Activated T-helper 1 cell treated with anti-CD3 and anti-CD28 coated beads, Interleukin-12 subunit alpha, Interleukin-12 subunit beta, Interleukin-2, Interleukin-4 antibody, amounts not matched to agents 30 ng/mL and 10 ng/mL and 1 ng/mL, durations not matched to agents 14 hours and 24 hours and 36 hours (primary cell): ENCODE measurements at regions of chr6 and their contacts with region 1.

Region 1: GRCh38 chr6:82247634-82248232 is at the start of gene IBTK:
- DNase-seq: peak; percentile 88
- H3K4me3 Mint-ChIP-seq: peak within 1 kb of the TSS; percentile 93
- H3K27ac Mint-ChIP-seq: peak within 1 kb of the TSS; percentile 92
- H3K4me1 Mint-ChIP-seq: peaks cover 39% of the 10 kb centered on the region
- H3K27me3 Mint-ChIP-seq: no peaks in the 10 kb centered on the region
- total RNA-seq, gene IBTK: 36.1 and 39.8 TPM in 2 replicates

Region 2: DNA sequence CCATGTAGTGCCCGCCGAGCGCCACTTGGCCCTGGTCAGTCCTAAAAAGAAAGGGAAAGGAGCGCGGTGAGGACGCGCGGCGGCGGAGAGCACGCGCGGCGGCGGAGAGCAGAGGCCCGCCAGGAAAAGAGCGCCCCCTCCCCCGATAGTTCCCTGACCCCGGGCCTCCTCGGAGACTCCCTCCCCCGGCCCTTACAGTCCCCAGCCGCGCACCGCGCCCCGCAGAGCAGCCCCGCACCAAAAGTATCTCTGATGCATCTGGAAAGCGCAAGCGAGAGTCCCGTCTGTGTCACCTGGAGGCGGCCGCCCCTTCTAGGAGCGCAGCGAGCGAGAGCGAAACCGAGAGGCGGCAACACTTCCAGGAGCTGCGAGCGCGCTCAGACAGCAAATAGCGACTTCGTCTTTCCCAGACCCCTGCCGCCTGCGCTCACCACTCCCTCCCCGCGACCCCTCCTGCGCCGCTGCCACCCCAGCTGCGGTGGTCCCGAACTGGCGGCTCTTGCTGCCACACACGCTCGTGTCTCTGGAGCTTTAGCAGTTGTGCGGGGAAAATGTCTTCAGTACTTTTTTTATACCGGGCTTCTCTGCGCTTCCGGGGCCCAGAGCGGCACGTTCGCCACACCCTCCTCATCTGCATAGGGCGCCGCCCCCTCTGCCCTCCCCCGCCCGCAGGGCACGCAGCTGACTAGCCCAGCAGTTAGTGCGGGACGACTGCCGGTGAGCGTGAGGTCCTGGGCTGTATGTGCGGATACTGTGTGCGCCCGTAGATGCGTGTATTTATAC is 495.4 kb before region 1 on chr6 and contains the start of gene TENT5A:
- intact Hi-C with region 1: loop called (anchors 5 kb)
- DNase-seq: peak; percentile 78
- H3K4me3 Mint-ChIP-seq: peak within 1 kb of the TSS; percentile 88
- H3K27ac Mint-ChIP-seq: peak within 1 kb of the TSS; percentile 72
- H3K4me1 Mint-ChIP-seq: peaks cover 16% of the 10 kb centered on the region
- H3K27me3 Mint-ChIP-seq: peaks cover 43% of the 10 kb centered on the region
- total RNA-seq, gene TENT5A: 0.34 and 0.47 TPM in 2 replicates

Region 3: GRCh38 chr6:82118150-82118562 is 129.6 kb before region 1 on chr6:
- intact Hi-C with region 1: no loop called
- DNase-seq: no peak
- H3K4me3 Mint-ChIP-seq: no peak overlapping the region
- H3K27ac Mint-ChIP-seq: no peak overlapping the region
- H3K4me1 Mint-ChIP-seq: no peaks in the 10 kb centered on the region
- H3K27me3 Mint-ChIP-seq: no peaks in the 10 kb centered on the region

Region 4: GRCh38 chr6:83055366-83055964 is 807.7 kb after region 1 on chr6:
- intact Hi-C with region 1: loop called (anchors 1 kb)
- DNase-seq: no peak
- H3K4me3 Mint-ChIP-seq: no peak overlapping the region
- H3K27ac Mint-ChIP-seq: no peak overlapping the region
- H3K4me1 Mint-ChIP-seq: peaks cover 6% of the 10 kb centered on the region
- H3K27me3 Mint-ChIP-seq: no peaks in the 10 kb centered on the region

Region 5: DNA sequence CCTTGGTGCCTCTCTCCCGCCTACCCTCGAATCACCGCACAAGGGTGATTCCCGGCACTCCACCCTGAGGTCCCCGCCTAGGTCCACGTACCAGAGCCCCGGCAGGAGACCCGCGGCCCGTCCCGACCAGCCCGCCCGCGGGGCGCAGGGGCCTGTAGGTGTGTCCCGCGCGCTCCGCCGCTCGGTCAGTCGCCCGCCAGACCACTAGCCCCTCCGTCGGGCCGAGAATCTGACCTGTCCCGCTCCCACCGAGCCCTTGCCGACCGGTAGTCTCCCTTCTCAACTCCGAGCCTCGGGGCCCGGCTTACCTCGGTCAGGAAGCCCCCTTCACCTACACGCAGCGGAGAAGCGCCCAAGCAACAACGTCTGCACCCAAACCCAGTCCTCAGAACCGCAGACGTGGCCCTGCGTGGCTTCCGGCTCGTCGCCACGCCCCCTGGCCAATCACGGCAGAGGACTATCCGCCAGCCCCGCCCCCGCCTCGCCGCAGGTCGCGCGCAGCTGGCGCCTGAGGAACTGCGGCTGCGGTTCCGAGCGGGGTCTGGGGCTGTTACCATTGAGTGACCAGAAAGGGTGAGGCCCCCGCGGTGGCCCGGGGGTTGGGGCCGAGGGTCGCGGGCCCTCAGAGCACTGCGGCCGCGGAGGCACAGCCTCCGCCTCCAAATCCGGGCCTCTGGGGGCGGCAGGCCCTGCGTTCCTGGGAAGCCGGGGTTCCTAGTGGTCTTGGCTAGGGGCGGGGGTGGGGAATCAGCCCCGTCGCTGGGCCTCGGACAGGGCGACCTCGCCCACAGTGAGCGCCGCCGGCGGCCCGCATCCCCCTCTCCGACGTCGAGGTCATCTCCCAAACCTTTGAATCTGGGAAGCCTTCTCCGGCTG is 945.4 kb after region 1 on chr6 and contains the starts of genes PGM3 and RWDD2A:
- intact Hi-C with region 1: loop called (anchors 2 kb)
- DNase-seq: peak; percentile 85
- H3K4me3 Mint-ChIP-seq: peak within 1 kb of the TSS; percentile 98
- H3K27ac Mint-ChIP-seq: peak within 1 kb of the TSS; percentile 94
- H3K4me1 Mint-ChIP-seq: peaks cover 38% of the 10 kb centered on the region
- H3K27me3 Mint-ChIP-seq: peaks cover 2% of the 10 kb centered on the region
- total RNA-seq, gene PGM3: 24.8 and 25.4 TPM in 2 replicates
- total RNA-seq, gene RWDD2A: 0.98 and 1.3 TPM in 2 replicates

Region 6: DNA sequence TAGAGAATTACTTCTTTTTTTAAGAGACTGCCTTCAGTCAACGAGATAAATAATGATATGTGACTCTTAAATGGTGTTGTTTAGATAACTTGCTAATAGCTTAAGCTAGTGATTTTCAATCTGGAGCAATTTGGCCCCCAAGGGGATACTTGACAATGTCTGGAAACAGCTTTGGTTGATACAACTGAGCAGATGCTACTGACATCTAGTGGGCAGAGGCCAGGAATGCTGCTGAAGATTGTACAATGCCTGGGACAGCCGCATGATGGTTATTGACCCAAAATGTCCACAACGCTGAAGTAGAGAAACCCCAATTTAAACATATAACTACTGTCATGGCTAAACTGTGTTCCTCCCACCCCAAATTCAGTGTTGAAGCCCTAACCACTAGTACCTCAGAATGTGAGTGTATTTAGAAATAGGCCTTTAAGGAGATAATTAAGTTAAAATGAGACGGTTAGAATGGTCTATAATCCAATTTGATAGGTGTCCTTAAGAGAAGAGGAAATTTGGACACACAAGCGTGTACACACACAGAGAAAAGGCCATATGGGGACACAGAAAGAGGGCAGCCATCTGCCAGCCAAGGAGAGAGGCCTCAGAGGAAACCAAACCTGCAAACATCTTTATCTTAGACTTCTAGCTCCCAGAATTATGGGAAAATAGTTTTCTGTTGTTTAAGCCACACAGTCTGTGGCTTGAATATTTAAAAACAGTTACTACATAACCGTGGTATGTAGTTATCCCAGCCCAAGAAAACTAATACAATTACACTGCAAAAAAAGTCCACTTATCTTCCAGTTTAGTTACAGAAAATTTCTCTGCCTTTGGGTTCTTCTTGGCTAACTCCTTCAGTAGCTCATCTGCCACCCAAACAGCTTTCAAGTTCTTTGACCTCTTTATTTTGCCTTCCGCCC is 967.7 kb after region 1 on chr6:
- intact Hi-C with region 1: loop called (anchors 5 kb)
- DNase-seq: peak; percentile 40
- H3K4me3 Mint-ChIP-seq: no peak overlapping the region
- H3K27ac Mint-ChIP-seq: no peak overlapping the region
- H3K4me1 Mint-ChIP-seq: no peaks in the 10 kb centered on the region
- H3K27me3 Mint-ChIP-seq: peaks cover 19% of the 10 kb centered on the region

Region 7: DNA sequence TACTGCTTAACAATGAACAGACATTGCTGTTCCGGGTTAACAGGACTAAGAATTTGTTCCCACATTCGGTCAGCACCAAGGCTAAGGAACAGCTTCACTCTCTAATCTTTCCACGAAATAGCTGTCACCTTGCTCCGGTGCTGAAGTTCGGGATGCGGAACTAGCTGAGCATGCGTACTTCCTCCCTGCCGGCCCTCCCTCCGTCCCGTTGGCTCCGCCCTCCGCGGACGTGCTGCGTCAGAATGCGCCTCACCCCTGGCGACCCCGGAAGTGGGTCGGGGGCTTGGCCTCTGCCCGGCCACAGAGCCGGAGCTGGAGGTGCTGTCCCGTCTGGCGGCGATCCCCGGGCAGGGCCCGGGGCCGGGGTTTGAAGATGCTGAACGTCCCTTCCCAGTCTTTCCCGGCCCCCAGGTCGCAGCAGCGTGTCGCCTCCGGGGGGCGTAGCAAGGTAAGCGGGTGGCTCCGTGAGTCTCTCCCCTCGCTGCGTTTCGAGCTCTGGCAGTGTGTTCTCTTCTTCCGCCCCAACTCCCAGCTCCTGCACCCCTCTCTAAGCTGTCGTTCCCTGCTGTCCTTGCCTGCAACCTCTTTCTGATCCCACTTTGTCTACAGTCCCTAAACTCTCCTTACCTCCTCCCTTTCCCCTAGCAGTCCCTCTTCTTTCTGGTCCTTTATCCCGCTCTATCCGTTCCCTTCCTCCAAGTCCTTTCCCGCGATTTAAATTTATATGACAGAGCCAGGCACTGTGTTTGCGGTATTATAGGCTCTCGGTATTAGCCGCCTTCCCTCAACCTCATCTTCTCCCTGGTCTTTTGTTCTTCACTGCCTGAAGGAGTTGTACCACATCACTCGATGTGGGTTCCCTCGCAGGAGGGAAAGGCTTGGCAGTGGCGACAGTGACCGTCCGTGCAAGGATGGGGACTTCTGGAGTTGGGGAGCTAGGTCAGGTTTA is 1612.0 kb after region 1 on chr6 and contains the start of gene CYB5R4:
- intact Hi-C with region 1: loop called (anchors 5 kb)
- DNase-seq: peak; percentile 91
- H3K4me3 Mint-ChIP-seq: peak within 1 kb of the TSS; percentile 99
- H3K27ac Mint-ChIP-seq: peak within 1 kb of the TSS; percentile 90
- H3K4me1 Mint-ChIP-seq: peaks cover 33% of the 10 kb centered on the region
- H3K27me3 Mint-ChIP-seq: peaks cover 11% of the 10 kb centered on the region
- total RNA-seq, gene CYB5R4: 24.5 and 25.3 TPM in 2 replicates

Region 8: GRCh38 chr6:84227434-84228197 is 1979.9 kb after region 1 on chr6 and contains the start of gene CEP162:
- intact Hi-C with region 1: loop called (anchors 5 kb)
- DNase-seq: peak; percentile 83
- H3K4me3 Mint-ChIP-seq: peak within 1 kb of the TSS; percentile 98
- H3K27ac Mint-ChIP-seq: peak within 1 kb of the TSS; percentile 86
- H3K4me1 Mint-ChIP-seq: peaks cover 10% of the 10 kb centered on the region
- H3K27me3 Mint-ChIP-seq: peaks cover 5% of the 10 kb centered on the region
- total RNA-seq, gene CEP162: 4.7 and 6.1 TPM in 2 replicates